Heart right ventricle (tissue), 16 donors: ENCODE measurements at regions of chr2 and their contacts with region 1.

Region 1: DNA sequence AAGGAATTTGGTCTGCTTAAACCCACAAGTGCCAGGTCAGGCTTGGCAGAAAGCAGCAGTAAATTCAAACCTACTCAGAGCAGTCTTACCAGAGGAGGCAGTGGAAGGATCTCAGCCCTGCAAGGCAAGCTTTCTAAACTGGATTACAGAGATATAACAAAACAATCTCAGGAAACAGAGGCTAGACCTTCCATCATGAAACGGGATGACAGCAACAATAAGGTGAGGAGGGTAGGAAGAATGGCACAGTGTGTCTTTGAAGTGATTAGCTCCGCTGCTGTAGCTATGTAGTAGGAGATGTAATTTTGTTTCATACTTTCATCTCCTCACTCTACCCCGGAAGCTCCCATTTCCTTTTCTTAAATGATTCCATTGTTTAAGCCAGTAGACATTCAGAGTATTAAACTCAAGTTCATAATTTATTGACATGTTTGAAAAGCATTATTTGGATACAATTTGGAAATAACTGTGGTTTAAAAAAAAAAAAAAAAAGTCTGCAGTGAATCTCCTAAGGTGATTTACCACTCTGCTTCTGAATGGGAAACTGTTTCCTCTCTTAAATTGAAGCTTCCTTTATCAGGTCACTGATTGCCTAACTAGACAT is 29.4 kb upstream of the DYSF start:
- DNase-seq: no peak
- ATAC-seq: peak in 5 of 8 donors; percentile 31 to 61 (median 50)
- H3K4me3 ChIP-seq: no peak overlapping the region
- H3K27ac ChIP-seq: peak overlapping the region in 2 of 10 donors; percentile 44 to 56
- H3K4me1 ChIP-seq: peaks cover 0 to 43% (median 14%) of the 10 kb centered on the region in 9 donors
- H3K27me3 ChIP-seq: no peaks in the 10 kb centered on the region
- CTCF ChIP-seq: no peak

Region 2: GRCh38 chr2:71385012-71385411 is 38.9 kb before region 1 on chr2:
- intact Hi-C with region 1: loop called in 1 of 10 experiments (anchors 5 kb)
- DNase-seq: no peak
- ATAC-seq: peak in 6 of 8 donors; percentile 20 to 68 (median 50)
- H3K4me3 ChIP-seq: no peak overlapping the region
- H3K27ac ChIP-seq: peak overlapping the region in 1 of 10 donors; percentile 17
- H3K4me1 ChIP-seq: peaks cover 0 to 13% (median 3%) of the 10 kb centered on the region in 9 donors
- H3K27me3 ChIP-seq: no peaks in the 10 kb centered on the region
- CTCF ChIP-seq: no peak

Region 3: GRCh38 chr2:72254831-72255447 is 831.0 kb after region 1 on chr2:
- intact Hi-C with region 1: no loop called
- DNase-seq: no peak
- ATAC-seq: no peak
- H3K4me3 ChIP-seq: no peak overlapping the region
- H3K27ac ChIP-seq: no peak overlapping the region
- H3K4me1 ChIP-seq: no peaks in the 10 kb centered on the region
- H3K27me3 ChIP-seq: no peaks in the 10 kb centered on the region
- CTCF ChIP-seq: no peak